ENCODE measurements at regions of chr13 and their contacts with region 1.

Region 1: GRCh38 chr13:43085545-43085944 is 62.2 kb downstream of the DNAJC15 start:
- DNase-seq: no peak
- ATAC-seq: no peak
- H3K4me3 ChIP-seq: no peak overlapping the region
- H3K27ac ChIP-seq: no peak overlapping the region
- H3K4me1 ChIP-seq: no peaks in the 10 kb centered on the region
- H3K27me3 ChIP-seq: no peaks in the 10 kb centered on the region

Region 2: GRCh38 chr13:42969558-42970172 is 115.9 kb before region 1 on chr13:
- intact Hi-C with region 1: loop called in 1 of 2 experiments (anchors 10 kb)
- DNase-seq: peak; percentile 79 to 93
- ATAC-seq: peak; percentile 88
- H3K4me3 ChIP-seq: no peak overlapping the region
- H3K27ac ChIP-seq: no peak overlapping the region
- H3K4me1 ChIP-seq: no peaks in the 10 kb centered on the region
- H3K27me3 ChIP-seq: no peaks in the 10 kb centered on the region

Region 3: GRCh38 chr13:43054803-43055802 is 30.4 kb before region 1 on chr13:
- intact Hi-C with region 1: no loop called
- DNase-seq: no peak
- ATAC-seq: peak; percentile 70
- H3K4me3 ChIP-seq: peak overlapping the region; percentile 67 to 89
- H3K27ac ChIP-seq: peak overlapping the region; percentile 43 to 64
- H3K4me1 ChIP-seq: peaks cover 0 to 4% of the 10 kb centered on the region in 2 donors
- H3K27me3 ChIP-seq: no peaks in the 10 kb centered on the region

Measured in aorta (tissue), 5 donors.